GM10248 (cell line): ENCODE measurements at regions of chr4 and their contacts with region 1.

Region 1: DNA sequence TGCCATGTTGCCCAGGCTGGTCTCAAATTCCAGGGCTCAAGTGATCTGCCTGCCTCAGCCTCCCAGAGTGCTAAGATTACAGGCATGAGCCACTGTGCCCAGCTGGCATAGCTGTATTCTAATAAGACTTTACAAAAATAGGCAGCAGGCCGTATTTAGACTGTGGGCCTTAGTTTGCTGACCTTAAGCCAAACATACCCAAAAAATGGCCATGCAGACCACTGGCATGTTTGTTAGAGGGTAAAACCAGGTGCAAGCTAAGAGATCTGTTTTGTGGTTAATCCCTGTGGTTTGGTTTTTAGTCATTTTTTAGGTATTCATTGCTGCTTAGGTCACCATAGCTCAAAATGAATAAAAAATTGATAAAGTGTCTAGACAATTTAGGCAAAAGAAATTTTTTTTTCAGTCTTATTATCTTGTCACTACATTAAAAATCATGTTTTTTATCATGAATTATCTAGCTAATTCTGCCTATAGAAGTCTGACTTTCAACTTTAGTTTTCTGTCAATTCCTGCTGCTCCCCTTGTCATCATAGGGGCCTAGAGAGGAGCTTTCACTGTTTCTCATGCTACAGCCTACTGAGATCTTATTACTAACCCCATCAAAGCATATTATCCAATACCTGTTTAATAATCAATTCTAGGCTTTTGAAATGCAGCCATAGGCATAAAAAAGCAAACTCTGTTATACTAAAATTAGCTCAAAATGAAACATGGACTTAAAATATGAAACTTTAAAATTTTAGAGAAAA is 7.5 kb upstream of the SPINK2 start:
- DNase-seq: no peak
- CTCF ChIP-seq: no peak

Region 2: GRCh38 chr4:56843421-56843899 is 14.5 kb after region 1 on chr4:
- CTCF ChIA-PET with region 1: interaction called, 16 read pairs
- POLR2A ChIA-PET with region 1: no interaction called
- DNase-seq: no peak
- CTCF ChIP-seq: no peak